ENCODE measurements at regions of chr17 and their contacts with region 1.

Region 1: GRCh38 chr17:48618256-48618897 is 3.3 kb upstream of the HOXB8 start:
- DNase-seq: peak; percentile 93
- H3K4me3 ChIP-seq: peak overlapping the region; percentile 15
- H3K27ac ChIP-seq: peak overlapping the region; percentile 62
- H3K4me1 ChIP-seq: peaks cover 13% of the 10 kb centered on the region
- H3K27me3 ChIP-seq: peaks cover 45% of the 10 kb centered on the region
- CTCF ChIP-seq: peak; percentile 98

Region 2: GRCh38 chr17:48037036-48037837 is 581.1 kb before region 1 on chr17 and contains the start of gene COPZ2:
- intact Hi-C with region 1: no loop called
- DNase-seq: peak; percentile 53
- H3K4me3 ChIP-seq: peak within 1 kb of the TSS; percentile 71
- H3K27ac ChIP-seq: no peak within 1 kb of the TSS
- H3K4me1 ChIP-seq: peaks cover 5% of the 10 kb centered on the region
- H3K27me3 ChIP-seq: no peaks in the 10 kb centered on the region
- CTCF ChIP-seq: peak; percentile 47
- total RNA-seq, gene COPZ2: 4.3 to 9.9 TPM

Region 3: GRCh38 chr17:48344246-48344645 is 274.1 kb before region 1 on chr17:
- intact Hi-C with region 1: loop called (anchors 5 kb)
- DNase-seq: no peak
- H3K4me3 ChIP-seq: no peak overlapping the region
- H3K27ac ChIP-seq: no peak overlapping the region
- H3K4me1 ChIP-seq: no peaks in the 10 kb centered on the region
- H3K27me3 ChIP-seq: no peaks in the 10 kb centered on the region
- CTCF ChIP-seq: no peak

Region 4: DNA sequence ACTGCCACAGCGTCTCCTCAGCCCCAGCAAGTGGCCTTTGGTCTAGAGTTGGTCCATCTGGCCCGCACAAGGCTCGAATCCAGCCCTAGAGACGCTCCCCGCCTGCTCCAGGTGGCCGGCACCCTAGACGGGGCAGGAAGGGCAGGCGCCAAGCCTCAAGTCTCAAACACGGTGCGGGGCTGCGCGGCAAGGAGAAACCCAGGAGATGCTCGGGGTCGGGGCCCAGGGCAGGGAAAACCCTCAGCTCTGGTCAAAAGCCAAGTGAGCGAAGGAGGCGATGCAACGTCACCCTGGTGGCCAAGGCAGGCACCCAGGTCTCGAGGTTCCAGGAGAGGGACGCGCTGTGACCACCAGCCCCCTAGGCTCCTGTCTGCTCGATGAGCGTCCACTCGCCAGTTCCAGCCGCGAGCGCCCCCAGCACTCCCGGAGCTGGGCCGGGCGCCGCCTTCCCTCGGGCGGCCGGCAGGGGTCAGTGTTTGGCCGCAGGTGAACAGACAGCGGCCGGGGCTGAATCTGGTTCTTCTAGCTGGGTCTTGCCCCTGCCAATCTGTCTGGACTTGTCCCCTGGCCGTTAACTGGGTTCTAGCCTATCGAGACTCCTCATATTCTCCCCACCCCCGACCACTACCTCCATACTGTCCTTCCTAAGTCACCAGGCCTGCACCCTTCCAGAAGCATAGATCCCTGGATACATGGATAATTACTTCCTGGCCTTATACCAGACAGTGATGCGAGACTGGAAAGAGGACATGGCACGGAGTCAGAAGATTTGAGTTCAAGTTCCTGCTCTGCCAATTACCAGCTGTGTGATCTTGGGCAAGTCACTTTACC is 60.0 kb after region 1 on chr17:
- intact Hi-C with region 1: no loop called
- DNase-seq: peak; percentile 83
- H3K4me3 ChIP-seq: no peak overlapping the region
- H3K27ac ChIP-seq: no peak overlapping the region
- H3K4me1 ChIP-seq: peaks cover 3% of the 10 kb centered on the region
- H3K27me3 ChIP-seq: no peaks in the 10 kb centered on the region
- CTCF ChIP-seq: peak; percentile 96